PC-9 (cell line): ENCODE measurements at regions of chr11 and their contacts with region 1.

Region 1: GRCh38 chr11:16738193-16738946 is at the start of gene C11orf58:
- DNase-seq: peak; percentile 89 to 90
- H3K4me3 ChIP-seq: peak within 1 kb of the TSS; percentile 71
- H3K27ac ChIP-seq: peak within 1 kb of the TSS; percentile 63
- H3K4me1 ChIP-seq: 0 out of 2 replicates have a peak, but pooled peaks cover 8% of the 10 kb centered on the region
- H3K27me3 ChIP-seq: no peaks in the 10 kb centered on the region
- CTCF ChIP-seq: no peak
- total RNA-seq, gene C11orf58: 82.3 and 84.1 TPM in 2 replicates

Region 2: DNA sequence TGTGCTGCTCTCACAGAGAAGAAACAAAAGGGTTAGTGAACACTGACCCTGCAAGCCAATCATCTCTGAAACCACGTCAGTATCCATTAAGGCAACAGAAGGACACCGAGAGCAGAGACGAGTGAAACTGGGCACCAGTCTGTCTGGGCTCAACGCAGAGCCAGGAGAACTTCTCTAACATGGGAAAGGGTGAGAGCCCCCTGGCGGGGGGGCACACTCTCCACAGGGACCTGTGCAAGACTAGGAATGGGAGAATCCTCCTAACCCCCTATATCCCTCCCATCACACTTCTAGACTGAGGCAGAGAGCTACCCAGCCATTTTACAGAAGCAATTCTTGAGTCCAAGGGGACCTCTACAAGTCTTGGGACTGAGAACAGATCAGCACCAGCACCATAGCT is 667.8 kb before region 1 on chr11:
- CTCF ChIA-PET with region 1: no interaction called
- POLR2A ChIA-PET with region 1: no interaction called
- intact Hi-C with region 1: no loop called
- DNase-seq: no peak
- H3K4me3 ChIP-seq: no peak overlapping the region
- H3K27ac ChIP-seq: no peak overlapping the region
- H3K4me1 ChIP-seq: no peaks in the 10 kb centered on the region
- H3K27me3 ChIP-seq: no peaks in the 10 kb centered on the region
- CTCF ChIP-seq: no peak

Region 3: GRCh38 chr11:16632295-16633200 is 105.8 kb before region 1 on chr11:
- CTCF ChIA-PET with region 1: no interaction called
- POLR2A ChIA-PET with region 1: no interaction called
- intact Hi-C with region 1: loop called (anchors 2 kb)
- DNase-seq: peak; percentile 28 to 73
- H3K4me3 ChIP-seq: no peak overlapping the region
- H3K27ac ChIP-seq: no peak overlapping the region
- H3K4me1 ChIP-seq: peaks cover 6% of the 10 kb centered on the region; the same call in 1 of the 2 replicates
- H3K27me3 ChIP-seq: no peaks in the 10 kb centered on the region
- CTCF ChIP-seq: peak; percentile 67